ENCODE measurements at regions of chr1 and their contacts with region 1.

Region 1: GRCh38 chr1:214427871-214428277 is 123.5 kb downstream of the PTPN14 start:
- DNase-seq: peak; percentile 99
- H3K4me3 ChIP-seq: no peak overlapping the region
- H3K27ac ChIP-seq: peak overlapping the region; percentile 92
- H3K4me1 ChIP-seq: peaks cover 52% of the 10 kb centered on the region
- H3K27me3 ChIP-seq: no peaks in the 10 kb centered on the region
- CTCF ChIP-seq: no peak

Region 2: DNA sequence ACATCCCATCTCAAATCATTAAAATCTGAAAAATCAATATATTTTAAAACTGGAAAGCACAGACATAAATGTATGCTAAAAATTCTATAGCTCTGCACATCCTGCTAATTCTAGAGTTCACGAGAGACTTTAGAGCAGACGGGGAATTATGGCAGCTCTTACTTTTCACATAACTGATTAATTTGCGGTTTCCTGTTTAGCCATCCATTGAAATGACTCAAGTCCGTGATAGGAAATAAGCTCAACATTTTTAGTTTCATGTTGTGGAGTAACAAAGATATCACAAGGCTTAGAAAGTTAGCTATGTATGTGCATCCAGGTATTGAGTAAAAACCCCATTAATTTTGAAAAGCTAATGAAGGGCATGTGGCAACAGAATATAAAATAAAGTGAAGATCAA is 23.7 kb before region 1 on chr1:
- CTCF ChIA-PET with region 1: no interaction called
- dilution Hi-C with region 1: no loop called
- in situ Hi-C with region 1: no loop called
- intact Hi-C with region 1: no loop called
- DNase-seq: peak; percentile 77
- H3K4me3 ChIP-seq: no peak overlapping the region
- H3K27ac ChIP-seq: peak overlapping the region; percentile 95
- H3K4me1 ChIP-seq: peaks cover 34% of the 10 kb centered on the region
- H3K27me3 ChIP-seq: no peaks in the 10 kb centered on the region
- CTCF ChIP-seq: no peak

Region 3: DNA sequence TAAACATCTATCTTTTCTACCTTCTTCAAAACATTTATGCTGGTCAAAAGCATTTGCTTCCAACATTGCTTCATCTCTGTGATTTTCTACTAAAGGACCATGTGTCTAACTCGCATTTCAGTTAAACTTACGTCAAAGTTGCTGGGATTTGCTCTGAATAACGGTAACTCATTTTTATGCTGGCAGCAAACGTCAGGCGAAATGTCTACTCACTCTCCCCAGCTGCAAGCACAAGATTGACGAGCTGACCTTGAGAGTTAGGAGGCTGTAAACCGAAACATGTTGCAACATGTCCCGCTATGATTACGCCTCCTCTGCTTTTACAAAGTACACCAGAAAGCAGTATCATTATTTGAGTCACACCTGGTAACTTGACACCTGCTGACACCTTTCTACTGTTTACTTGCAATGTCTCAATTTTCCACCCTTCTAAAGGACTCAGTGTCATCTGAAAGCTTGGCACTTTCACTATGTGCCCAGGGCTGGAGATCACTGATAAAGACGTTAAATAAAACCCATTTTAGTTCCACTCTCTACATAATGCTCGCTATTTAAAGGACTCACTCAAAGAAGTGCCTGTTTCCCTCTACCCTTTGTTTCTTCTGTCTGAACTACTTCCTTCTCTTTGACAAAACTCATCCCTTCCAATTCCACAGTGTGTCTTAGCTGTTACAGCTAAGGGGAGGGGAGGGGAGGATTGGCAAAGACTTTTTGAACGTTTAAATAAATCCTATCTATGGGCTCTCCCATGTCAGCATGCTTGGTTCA is 11.7 kb after region 1 on chr1:
- CTCF ChIA-PET with region 1: no interaction called
- dilution Hi-C with region 1: no loop called
- in situ Hi-C with region 1: no loop called
- intact Hi-C with region 1: loop called (anchors 1 kb)
- DNase-seq: peak; percentile 99
- H3K4me3 ChIP-seq: peak overlapping the region in 2 of 3 experiments; percentile 7 to 28
- H3K27ac ChIP-seq: peak overlapping the region; percentile 100
- H3K4me1 ChIP-seq: peaks cover 55% of the 10 kb centered on the region
- H3K27me3 ChIP-seq: no peaks in the 10 kb centered on the region
- CTCF ChIP-seq: no peak

Region 4: GRCh38 chr1:214542275-214543199 is 114.7 kb after region 1 on chr1:
- CTCF ChIA-PET with region 1: no interaction called
- dilution Hi-C with region 1: no loop called
- in situ Hi-C with region 1: no loop called
- intact Hi-C with region 1: no loop called
- DNase-seq: no peak
- H3K4me3 ChIP-seq: no peak overlapping the region
- H3K27ac ChIP-seq: no peak overlapping the region
- H3K4me1 ChIP-seq: peaks cover 48% of the 10 kb centered on the region
- H3K27me3 ChIP-seq: no peaks in the 10 kb centered on the region
- CTCF ChIP-seq: no peak

Region 5: DNA sequence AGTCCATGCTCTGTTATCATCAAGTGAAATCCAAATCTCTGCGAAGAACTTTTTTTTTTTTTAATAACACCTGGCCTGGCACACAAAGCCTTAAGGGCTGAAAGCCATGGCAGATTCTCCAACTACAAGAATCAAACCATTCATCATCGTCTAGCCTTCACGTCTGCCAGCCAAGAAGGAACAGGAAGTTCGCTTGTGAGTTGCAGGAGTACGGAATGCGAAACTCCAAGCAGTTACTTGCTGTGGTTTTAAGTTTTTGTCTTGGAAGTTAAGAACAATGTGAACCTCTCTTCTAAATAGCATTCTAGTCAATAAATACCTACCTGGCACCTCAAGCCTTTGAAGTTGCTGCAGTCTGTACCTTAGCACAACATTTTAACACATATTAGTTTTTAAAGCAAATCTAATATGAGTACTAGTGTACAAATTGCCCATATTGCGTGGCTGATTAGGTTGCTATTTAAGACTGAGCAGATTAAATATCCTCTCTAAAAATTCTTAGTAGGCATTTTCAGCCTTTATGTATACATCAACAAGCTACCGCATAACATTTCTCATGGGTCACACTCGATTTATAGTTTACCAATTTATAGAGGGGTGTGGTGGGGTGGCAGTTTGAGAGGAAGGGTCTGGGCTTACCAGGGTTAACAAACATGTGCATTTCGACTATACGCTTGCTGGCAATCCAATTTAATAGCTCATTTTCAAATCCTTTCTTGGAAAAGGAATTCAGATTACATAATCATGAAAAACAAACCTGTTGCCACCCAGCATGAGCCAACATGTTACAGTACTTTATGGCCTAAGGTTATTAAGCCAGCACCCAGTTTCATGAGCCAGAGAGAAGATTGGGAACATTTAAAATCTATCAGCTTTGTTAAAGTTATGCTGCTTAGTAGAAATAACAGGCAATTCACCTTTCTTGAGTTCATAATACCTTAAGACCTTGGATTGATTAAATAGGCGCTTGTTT is 145.8 kb after region 1 on chr1:
- CTCF ChIA-PET with region 1: no interaction called
- dilution Hi-C with region 1: no loop called
- in situ Hi-C with region 1: no loop called
- intact Hi-C with region 1: loop called (anchors 2 kb)
- DNase-seq: peak; percentile 87
- H3K4me3 ChIP-seq: peak overlapping the region; percentile 9 to 25 (median 16)
- H3K27ac ChIP-seq: peak overlapping the region; percentile 99
- H3K4me1 ChIP-seq: peaks cover 68% of the 10 kb centered on the region
- H3K27me3 ChIP-seq: no peaks in the 10 kb centered on the region
- CTCF ChIP-seq: no peak